ENCODE measurements at regions of chr1 and their contacts with region 1.

Region 1: DNA sequence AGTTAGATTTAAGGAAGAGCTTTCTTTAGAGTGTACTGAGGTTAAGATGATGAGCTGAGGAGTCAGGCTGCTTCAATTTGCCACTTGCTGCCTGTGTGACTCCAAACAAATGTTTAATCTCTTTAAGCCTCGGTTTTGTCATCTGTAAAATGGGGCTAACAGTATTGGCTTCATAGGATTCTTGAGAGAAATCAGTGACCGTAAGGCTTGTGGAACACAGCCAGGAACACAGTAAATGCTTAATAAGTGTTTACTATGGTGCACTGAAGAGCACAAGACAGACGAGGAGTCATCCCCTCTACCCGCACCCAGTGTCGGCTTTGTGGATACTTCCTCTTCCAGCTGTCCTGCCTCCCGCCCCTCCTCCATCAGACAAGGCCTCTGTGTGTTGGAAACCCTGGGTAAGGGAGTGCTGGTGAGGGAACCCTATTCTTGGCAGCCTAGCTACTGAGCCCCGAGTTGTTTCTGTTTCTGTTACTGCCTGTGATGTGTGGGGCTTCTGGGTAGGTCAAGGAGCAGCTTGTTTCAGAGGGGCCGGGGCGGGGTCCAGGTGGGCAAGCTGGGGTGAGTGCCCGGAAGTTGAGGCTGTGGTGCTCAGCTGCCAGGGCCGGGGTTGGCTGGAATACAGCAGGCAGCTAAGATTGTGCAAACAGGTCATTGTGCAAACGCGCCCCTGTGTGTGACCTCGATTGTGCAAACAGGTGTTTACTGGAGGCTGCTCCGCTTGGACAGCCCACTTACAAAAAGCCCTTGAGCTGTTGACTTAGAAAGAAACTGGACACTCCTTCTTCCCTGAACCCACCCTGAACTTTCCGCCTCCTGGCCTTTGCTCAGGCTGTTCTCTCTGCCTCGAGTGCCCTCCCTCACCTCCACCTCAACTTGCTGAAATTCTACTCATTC is 4.0 kb upstream of the CSF3R start:
- DNase-seq: peak; percentile 90 to 96 (median 95)
- H3K4me3 ChIP-seq: peak overlapping the region; percentile 3 to 64 (median 13)
- H3K4me3 Mint-ChIP-seq: peak overlapping the region; percentile 21 to 86
- H3K27ac ChIP-seq: peak overlapping the region; percentile 94 to 99
- H3K27ac Mint-ChIP-seq: peak overlapping the region; percentile 98 to 100 (median 99)
- H3K4me1 ChIP-seq: peaks cover 67 to 74% of the 10 kb centered on the region in 2 donors
- H3K4me1 Mint-ChIP-seq: peaks cover 77% of the 10 kb centered on the region
- H3K27me3 ChIP-seq: no peaks in the 10 kb centered on the region
- H3K27me3 Mint-ChIP-seq: peaks cover 0 to 5% (median 0%) of the 10 kb centered on the region in 3 donors
- CTCF ChIP-seq: no peak

Region 2: DNA sequence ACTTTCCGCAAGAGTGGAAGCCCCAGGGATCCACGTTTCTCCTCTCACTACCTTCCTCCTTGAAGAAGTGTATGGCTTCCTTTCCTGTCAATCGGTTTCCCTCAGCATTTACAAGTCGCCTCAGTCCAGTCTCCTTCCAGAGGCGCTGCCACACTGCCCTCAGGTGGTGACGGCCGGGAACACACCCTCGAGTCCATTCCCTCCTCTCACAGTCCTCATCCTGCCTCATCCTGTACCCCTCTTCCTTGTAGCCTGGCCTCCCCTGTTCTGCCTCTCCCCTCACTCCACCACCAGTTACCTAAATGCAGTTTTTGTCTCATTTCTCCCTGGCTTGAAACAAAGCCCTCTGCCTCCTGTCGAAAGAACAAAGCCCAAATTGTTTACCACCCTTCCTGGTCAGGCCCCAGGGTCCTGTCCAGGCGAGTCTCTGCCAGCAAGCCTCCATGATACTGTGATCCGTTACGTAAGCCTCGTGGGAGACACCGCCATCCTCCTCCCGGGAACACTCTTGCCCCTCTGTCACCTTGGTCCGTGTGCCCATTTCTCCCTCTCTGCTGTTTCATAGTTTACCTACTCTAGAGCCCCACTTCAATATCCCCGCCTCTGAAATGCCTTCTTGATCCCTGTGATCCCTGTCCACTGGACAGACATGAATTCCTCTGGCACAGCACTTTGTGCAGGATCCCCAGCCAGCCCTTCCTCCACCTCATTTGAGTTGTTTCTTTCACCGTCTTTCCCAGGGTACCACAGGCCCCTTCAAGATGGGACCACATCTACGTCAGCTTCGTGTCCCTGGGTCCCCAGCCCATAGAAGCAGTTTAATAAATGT is 65.6 kb before region 1 on chr1:
- intact Hi-C with region 1: no loop called
- DNase-seq: peak; percentile 80 to 90 (median 84)
- H3K4me3 ChIP-seq: no peak overlapping the region
- H3K4me3 Mint-ChIP-seq: peak overlapping the region in 1 of 2 donors; percentile 19
- H3K27ac ChIP-seq: no peak overlapping the region
- H3K27ac Mint-ChIP-seq: peak overlapping the region in 6 of 7 donors; percentile 32 to 86 (median 72)
- H3K4me1 ChIP-seq: peaks cover 4 to 5% of the 10 kb centered on the region in 2 donors
- H3K4me1 Mint-ChIP-seq: peaks cover 8% of the 10 kb centered on the region
- H3K27me3 ChIP-seq: no peaks in the 10 kb centered on the region
- H3K27me3 Mint-ChIP-seq: peaks cover 0 to 1% (median 0%) of the 10 kb centered on the region in 3 donors
- CTCF ChIP-seq: peak; percentile 88

Region 3: GRCh38 chr1:36463803-36464604 is 22.7 kb before region 1 on chr1 and contains the start of gene MRPS15:
- intact Hi-C with region 1: loop called in 1 of 2 experiments (anchors 2 kb)
- DNase-seq: peak; percentile 96
- H3K4me3 ChIP-seq: peak within 1 kb of the TSS; percentile 71 to 99 (median 88)
- H3K4me3 Mint-ChIP-seq: peak within 1 kb of the TSS; percentile 92 to 98
- H3K27ac ChIP-seq: peak within 1 kb of the TSS; percentile 91 to 99
- H3K27ac Mint-ChIP-seq: peak within 1 kb of the TSS; percentile 93 to 98 (median 96)
- H3K4me1 ChIP-seq: peaks cover 35 to 40% of the 10 kb centered on the region in 2 donors
- H3K4me1 Mint-ChIP-seq: peaks cover 40% of the 10 kb centered on the region
- H3K27me3 ChIP-seq: no peaks in the 10 kb centered on the region
- H3K27me3 Mint-ChIP-seq: peaks cover 0 to 4% (median 3%) of the 10 kb centered on the region in 3 donors
- CTCF ChIP-seq: no peak
- polyA plus RNA-seq, gene MRPS15: 36.2 to 68.1 (median 66.4) TPM